Activated CD4-positive, alpha-beta T cell treated with anti-CD3 and anti-CD28 coated beads, Interleukin-2, amount 10 ng/mL, durations not matched to agents 24 days and 14 days (primary cell): ENCODE measurements at regions of chr13 and their contacts with region 1.

Region 1: DNA sequence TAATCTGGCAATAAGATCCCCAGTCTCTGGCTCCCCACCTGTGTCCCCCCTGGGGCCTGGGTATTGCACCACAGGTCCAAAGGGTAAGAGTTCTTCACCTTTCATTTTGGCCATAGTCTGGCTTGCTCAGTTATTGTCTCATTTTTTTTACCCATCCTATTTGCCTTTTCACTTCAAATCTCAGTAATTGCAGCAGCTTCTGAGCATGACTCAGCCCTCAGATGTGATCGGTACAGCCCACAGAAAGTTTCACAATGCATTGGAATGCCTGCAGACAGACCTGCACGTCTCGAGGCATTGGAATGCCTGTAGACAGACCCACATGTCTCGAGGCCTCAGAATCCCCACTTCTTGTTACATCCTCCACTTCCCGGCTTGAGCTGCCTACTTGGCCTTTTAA is 173.6 kb downstream of the NUFIP1 start:
- DNase-seq: peak; percentile 71
- H3K4me3 Mint-ChIP-seq: no peak overlapping the region
- H3K27ac Mint-ChIP-seq: no peak overlapping the region
- H3K4me1 Mint-ChIP-seq: peaks cover 16% of the 10 kb centered on the region
- H3K27me3 Mint-ChIP-seq: peaks cover 29% of the 10 kb centered on the region

Region 2: DNA sequence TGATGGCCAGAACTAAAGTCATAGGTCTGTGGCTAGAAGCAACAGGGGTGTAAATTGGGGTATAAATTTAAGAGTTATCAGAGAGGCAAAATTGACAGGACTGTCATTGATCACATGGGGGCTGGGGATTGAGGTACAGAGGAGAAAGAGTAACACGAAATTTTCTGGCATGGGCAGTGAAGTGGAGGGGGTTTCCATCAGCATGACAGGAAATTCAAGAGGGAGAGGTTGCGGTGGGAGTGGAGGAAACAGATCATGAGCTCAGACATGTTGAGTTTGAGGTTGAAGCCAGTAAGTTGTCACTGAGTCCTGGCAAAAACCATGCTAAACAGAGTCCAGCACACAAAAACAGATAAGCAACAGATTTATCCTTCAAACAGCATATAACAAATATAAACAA is 47.4 kb before region 1 on chr13:
- intact Hi-C with region 1: loop called (anchors 1 kb)
- DNase-seq: peak; percentile 88
- H3K4me3 Mint-ChIP-seq: peak overlapping the region; percentile 54
- H3K27ac Mint-ChIP-seq: peak overlapping the region; percentile 79
- H3K4me1 Mint-ChIP-seq: peaks cover 35% of the 10 kb centered on the region
- H3K27me3 Mint-ChIP-seq: no peaks in the 10 kb centered on the region